GM12878 (cell line): ENCODE measurements at regions of chr1 and their contacts with region 1.

Region 1: DNA sequence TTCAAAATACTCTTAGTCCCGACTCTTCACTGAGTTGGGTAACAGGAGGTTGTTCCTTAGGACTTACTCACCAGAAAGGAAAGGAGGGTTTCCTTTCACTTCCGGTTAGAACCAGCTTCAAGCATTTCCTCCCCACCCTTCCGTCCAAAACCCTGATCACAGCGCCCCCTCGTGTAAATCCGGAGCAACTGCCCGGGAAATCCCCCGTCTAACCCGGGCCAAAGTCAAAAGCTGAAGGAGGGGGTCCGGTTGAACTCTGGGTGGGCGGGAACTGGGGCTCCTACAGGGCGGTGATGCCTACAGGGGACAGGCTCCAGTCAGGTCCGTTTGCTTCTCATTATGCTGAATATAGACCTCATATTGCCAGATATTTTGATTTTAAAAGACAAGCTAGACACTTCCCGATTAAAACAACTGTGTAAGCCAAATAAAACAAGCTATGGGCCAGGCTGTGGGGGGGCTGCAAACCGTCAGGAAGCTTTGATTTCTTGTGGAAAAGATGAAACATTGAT is 15.0 kb upstream of the MTARC2 start:
- DNase-seq: peak; percentile 13
- ATAC-seq: peak; percentile 96
- H3K4me3 ChIP-seq: no peak overlapping the region
- H3K27ac ChIP-seq: no peak overlapping the region
- H3K4me1 ChIP-seq: no peaks in the 10 kb centered on the region
- H3K27me3 ChIP-seq: no peaks in the 10 kb centered on the region
- CTCF ChIP-seq: peak; percentile 78 to 81 (median 80)
- EP300 ChIP-seq: no peak
- POLR2A ChIP-seq: no peak
- RAD21 ChIP-seq: peak; percentile 91

Region 2: GRCh38 chr1:220281159-220281574 is 452.0 kb before region 1 on chr1:
- CTCF ChIA-PET with region 1: interaction called, 17 read pairs
- POLR2A ChIA-PET with region 1: no interaction called
- RAD21 ChIA-PET with region 1: interaction called, 19 read pairs
- SMC1A ChIA-PET with region 1: interaction called, 14 read pairs
- in situ Hi-C with region 1: no loop called
- intact Hi-C with region 1: no loop called
- DNase-seq: no peak
- ATAC-seq: peak; percentile 78
- H3K4me3 ChIP-seq: no peak overlapping the region
- H3K27ac ChIP-seq: no peak overlapping the region
- H3K4me1 ChIP-seq: no peaks in the 10 kb centered on the region
- H3K27me3 ChIP-seq: peaks cover 0 to 2% of the 10 kb centered on the region in 2 experiments; a peak in 1 of 4 replicates
- CTCF ChIP-seq: peak; percentile 24 to 52 (median 40); a peak in 5 of 6 replicates
- EP300 ChIP-seq: no peak
- POLR2A ChIP-seq: no peak
- RAD21 ChIP-seq: peak; percentile 77

Region 3: DNA sequence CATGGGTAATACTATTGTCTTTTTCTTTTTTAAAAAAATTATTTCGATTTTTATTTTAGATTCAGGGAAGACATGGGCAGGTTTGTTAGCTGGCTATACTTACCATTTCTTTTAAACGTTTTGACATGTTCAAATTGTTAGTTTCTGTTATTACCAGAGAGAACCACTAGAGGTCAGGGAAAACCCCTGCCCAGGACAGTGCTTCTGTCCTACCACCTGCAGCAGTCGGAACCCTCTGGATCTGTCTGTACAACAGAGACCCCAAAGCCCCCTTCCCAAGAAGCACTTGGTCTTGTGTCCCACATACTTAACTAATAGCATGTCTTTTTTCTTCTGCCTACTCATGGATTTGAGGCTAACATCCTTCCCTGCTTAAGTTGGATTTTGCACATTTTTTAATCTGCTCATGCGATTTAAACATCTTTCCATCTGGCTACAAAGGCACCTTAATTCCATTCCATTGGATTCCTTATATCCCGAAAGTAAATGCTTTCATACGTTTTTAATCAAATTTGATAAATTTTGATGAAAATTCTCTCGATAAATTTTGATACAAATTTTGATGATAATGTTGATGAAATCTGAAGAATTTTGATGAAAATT is 53.0 kb before region 1 on chr1:
- CTCF ChIA-PET with region 1: interaction called, 37 read pairs
- POLR2A ChIA-PET with region 1: no interaction called
- RAD21 ChIA-PET with region 1: interaction called, 12 read pairs
- SMC1A ChIA-PET with region 1: interaction called, 18 read pairs
- in situ Hi-C with region 1: no loop called
- intact Hi-C with region 1: loop called (anchors 1 kb)
- DNase-seq: no peak
- ATAC-seq: peak; percentile 97
- H3K4me3 ChIP-seq: no peak overlapping the region
- H3K27ac ChIP-seq: no peak overlapping the region
- H3K4me1 ChIP-seq: no peaks in the 10 kb centered on the region
- H3K27me3 ChIP-seq: no peaks in the 10 kb centered on the region
- CTCF ChIP-seq: peak; percentile 63 to 77 (median 66)
- EP300 ChIP-seq: no peak
- POLR2A ChIP-seq: no peak
- RAD21 ChIP-seq: peak; percentile 72

Region 4: GRCh38 chr1:220700556-220701179 is 32.5 kb before region 1 on chr1:
- CTCF ChIA-PET with region 1: interaction called, 17 read pairs
- POLR2A ChIA-PET with region 1: no interaction called
- RAD21 ChIA-PET with region 1: interaction called, 10 read pairs
- SMC1A ChIA-PET with region 1: interaction called, 27 read pairs
- in situ Hi-C with region 1: no loop called
- intact Hi-C with region 1: no loop called
- DNase-seq: no peak
- ATAC-seq: no peak
- H3K4me3 ChIP-seq: no peak overlapping the region
- H3K27ac ChIP-seq: no peak overlapping the region
- H3K4me1 ChIP-seq: no peaks in the 10 kb centered on the region
- H3K27me3 ChIP-seq: no peaks in the 10 kb centered on the region
- CTCF ChIP-seq: no peak
- EP300 ChIP-seq: no peak
- POLR2A ChIP-seq: no peak
- RAD21 ChIP-seq: no peak

Region 5: DNA sequence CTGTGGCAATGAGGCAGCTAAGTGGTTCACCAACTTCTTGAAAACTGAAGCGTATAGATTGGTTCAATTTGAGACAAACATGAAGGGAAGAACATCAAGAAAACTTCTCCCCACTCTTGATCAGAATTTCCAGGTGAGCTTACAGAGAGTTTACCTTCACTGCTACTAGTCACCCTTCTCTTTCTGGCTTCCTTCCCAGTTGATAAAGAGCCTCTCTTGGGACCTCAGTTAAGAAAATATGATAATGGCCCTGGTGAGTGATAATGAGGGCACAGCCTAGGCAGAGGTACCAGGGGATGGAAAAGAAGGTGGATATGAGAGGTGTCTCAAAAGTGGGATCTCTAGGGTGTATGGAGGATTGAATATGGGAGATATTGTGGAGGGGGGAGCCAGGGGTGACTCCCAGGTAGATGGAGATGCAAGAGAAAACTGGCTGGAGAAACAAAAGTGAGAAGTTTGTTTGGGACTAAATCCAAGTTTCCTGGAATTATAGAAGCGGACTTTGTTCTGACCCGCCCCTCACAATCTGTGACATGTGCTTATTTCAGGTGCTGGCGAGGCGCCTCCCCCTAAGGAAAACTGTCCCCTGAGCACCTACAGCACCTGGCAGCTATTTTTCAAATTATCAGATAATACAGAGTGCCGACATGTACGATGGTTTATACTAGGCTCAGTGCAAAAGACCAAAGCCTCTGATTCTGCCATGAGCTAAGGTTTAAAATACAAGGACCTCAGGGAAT is 28.7 kb after region 1 on chr1:
- CTCF ChIA-PET with region 1: interaction called, 16 read pairs
- POLR2A ChIA-PET with region 1: no interaction called
- RAD21 ChIA-PET with region 1: interaction called, 3 read pairs
- SMC1A ChIA-PET with region 1: interaction called, 4 read pairs
- in situ Hi-C with region 1: no loop called
- intact Hi-C with region 1: no loop called
- DNase-seq: no peak
- ATAC-seq: no peak
- H3K4me3 ChIP-seq: no peak overlapping the region
- H3K27ac ChIP-seq: no peak overlapping the region
- H3K4me1 ChIP-seq: no peaks in the 10 kb centered on the region
- H3K27me3 ChIP-seq: no peaks in the 10 kb centered on the region; a peak in 1 of 4 replicates
- CTCF ChIP-seq: no peak
- EP300 ChIP-seq: no peak
- POLR2A ChIP-seq: no peak
- RAD21 ChIP-seq: no peak